CD4-positive, alpha-beta memory T cell (primary cell): ENCODE measurements at regions of chr19 and their contacts with region 1.

Region 1: GRCh38 chr19:54448774-54449700 is at the start of gene LENG8:
- DNase-seq: peak; percentile 98 to 99 (median 99)
- H3K4me3 ChIP-seq: peak within 1 kb of the TSS; percentile 75 to 98
- H3K4me3 Mint-ChIP-seq: peak within 1 kb of the TSS; percentile 91 to 100 (median 98)
- H3K27ac ChIP-seq: peak within 1 kb of the TSS; percentile 93
- H3K27ac Mint-ChIP-seq: peak within 1 kb of the TSS; percentile 96 to 100 (median 99)
- H3K4me1 ChIP-seq: peaks cover 46% of the 10 kb centered on the region
- H3K4me1 Mint-ChIP-seq: peaks cover 25 to 69% (median 41%) of the 10 kb centered on the region in 4 donors
- H3K27me3 ChIP-seq: no peaks in the 10 kb centered on the region
- H3K27me3 Mint-ChIP-seq: peaks cover 0 to 3% of the 10 kb centered on the region in 2 donors
- total RNA-seq, gene LENG8: 535 to 565 TPM

Region 2: DNA sequence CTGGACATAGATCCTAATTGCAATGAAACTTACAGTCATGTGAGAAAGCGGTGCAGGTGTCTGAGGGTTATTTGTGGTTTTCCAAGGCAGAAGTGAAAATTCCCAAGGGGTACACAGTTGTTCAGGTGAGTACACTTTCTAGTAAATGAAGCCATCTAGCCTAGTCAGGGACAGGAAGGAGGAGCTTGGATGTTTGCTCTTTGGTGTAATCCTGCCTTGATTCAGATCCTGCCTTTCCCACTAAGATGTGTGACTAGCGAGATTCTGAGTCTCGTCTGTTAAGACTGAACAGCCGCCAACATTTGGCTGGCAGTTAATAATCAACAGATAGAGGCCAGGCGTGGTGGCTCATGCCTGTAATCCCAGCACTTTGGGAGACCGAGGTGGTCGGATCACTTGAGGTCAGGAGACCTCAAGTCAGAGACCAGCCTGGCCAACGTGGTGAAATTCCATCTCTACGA is 245.9 kb before region 1 on chr19:
- CTCF ChIA-PET with region 1: no interaction called
- POLR2A ChIA-PET with region 1: interaction called, 6 read pairs
- intact Hi-C with region 1: loop called (anchors 5 kb)
- DNase-seq: no peak
- H3K4me3 ChIP-seq: no peak overlapping the region
- H3K4me3 Mint-ChIP-seq: peak overlapping the region; percentile 10 to 100 (median 64)
- H3K27ac ChIP-seq: peak overlapping the region; percentile 89
- H3K27ac Mint-ChIP-seq: peak overlapping the region in 6 of 7 donors; percentile 66 to 99 (median 85)
- H3K4me1 ChIP-seq: peaks cover 74% of the 10 kb centered on the region
- H3K4me1 Mint-ChIP-seq: peaks cover 44 to 86% (median 62%) of the 10 kb centered on the region in 4 donors
- H3K27me3 ChIP-seq: no peaks in the 10 kb centered on the region
- H3K27me3 Mint-ChIP-seq: no peaks in the 10 kb centered on the region

Region 3: DNA sequence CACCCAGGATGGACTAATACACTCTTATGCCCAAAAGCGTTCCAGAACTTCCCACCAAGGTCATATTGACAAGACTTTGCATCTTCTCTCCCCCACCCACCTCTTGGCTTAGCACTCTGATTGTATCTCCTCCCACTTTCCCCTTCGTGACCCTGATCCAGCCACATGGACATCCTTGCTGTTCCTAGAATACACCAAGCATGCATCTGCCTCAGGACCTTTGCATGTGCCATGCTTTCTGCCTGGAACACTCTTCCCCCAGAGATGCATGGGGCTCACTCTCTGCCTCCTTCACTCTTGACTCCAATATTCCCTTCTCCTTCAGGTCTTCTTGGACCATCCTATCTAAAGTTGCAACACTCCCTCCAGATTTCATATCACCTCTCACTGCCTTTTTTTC is 68.1 kb before region 1 on chr19:
- CTCF ChIA-PET with region 1: no interaction called
- POLR2A ChIA-PET with region 1: no interaction called
- intact Hi-C with region 1: no loop called
- DNase-seq: no peak
- H3K4me3 ChIP-seq: no peak overlapping the region
- H3K4me3 Mint-ChIP-seq: peak overlapping the region in 1 of 8 donors; percentile 27
- H3K27ac ChIP-seq: no peak overlapping the region
- H3K27ac Mint-ChIP-seq: peak overlapping the region in 3 of 7 donors; percentile 17 to 74 (median 49)
- H3K4me1 ChIP-seq: peaks cover 40% of the 10 kb centered on the region
- H3K4me1 Mint-ChIP-seq: peaks cover 35 to 61% (median 53%) of the 10 kb centered on the region in 4 donors
- H3K27me3 ChIP-seq: no peaks in the 10 kb centered on the region
- H3K27me3 Mint-ChIP-seq: no peaks in the 10 kb centered on the region

Region 4: DNA sequence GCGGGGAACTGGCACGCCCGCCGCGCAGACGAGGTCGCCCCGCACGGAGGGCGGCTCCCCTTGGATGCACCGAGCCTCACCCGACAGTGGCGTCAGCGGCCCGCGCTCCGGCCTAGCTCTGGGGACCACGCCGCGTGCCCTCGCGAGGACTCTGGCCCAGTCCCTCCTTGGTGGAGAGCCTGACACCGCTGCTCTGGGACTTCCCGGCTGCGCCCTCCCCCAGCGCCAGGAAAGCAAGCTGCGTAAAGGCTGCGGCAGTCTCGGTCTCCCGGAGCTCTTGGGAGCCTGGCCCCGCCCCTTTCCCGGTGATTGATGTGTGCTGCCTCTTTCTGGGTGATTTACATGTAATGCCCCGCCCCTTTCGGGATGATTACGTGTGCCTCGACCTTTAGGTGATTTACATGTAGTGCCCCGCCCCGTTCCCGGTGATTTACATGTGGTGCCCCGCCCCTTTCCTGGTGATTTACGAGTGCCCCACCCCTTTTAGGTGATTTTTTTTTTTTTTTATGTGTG is 14.6 kb after region 1 on chr19 and contains the start of gene LENG9:
- CTCF ChIA-PET with region 1: interaction called, 4 read pairs
- POLR2A ChIA-PET with region 1: interaction called, 142 read pairs
- intact Hi-C with region 1: loop called (anchors 1 kb)
- DNase-seq: peak; percentile 86 to 99 (median 91)
- H3K4me3 ChIP-seq: peak within 1 kb of the TSS; percentile 65 to 85
- H3K4me3 Mint-ChIP-seq: peak within 1 kb of the TSS; percentile 84 to 92 (median 89)
- H3K27ac ChIP-seq: peak within 1 kb of the TSS; percentile 81
- H3K27ac Mint-ChIP-seq: peak within 1 kb of the TSS; percentile 92 to 99 (median 95)
- H3K4me1 ChIP-seq: peaks cover 27% of the 10 kb centered on the region
- H3K4me1 Mint-ChIP-seq: peaks cover 15 to 37% (median 27%) of the 10 kb centered on the region in 4 donors
- H3K27me3 ChIP-seq: no peaks in the 10 kb centered on the region
- H3K27me3 Mint-ChIP-seq: peaks cover 0 to 2% of the 10 kb centered on the region in 2 donors
- total RNA-seq, gene LENG9: 7.2 to 7.3 TPM

Region 5: GRCh38 chr19:54541712-54542111 is 92.7 kb after region 1 on chr19:
- CTCF ChIA-PET with region 1: no interaction called
- POLR2A ChIA-PET with region 1: no interaction called
- intact Hi-C with region 1: no loop called
- DNase-seq: no peak
- H3K4me3 ChIP-seq: no peak overlapping the region
- H3K4me3 Mint-ChIP-seq: no peak overlapping the region
- H3K27ac ChIP-seq: no peak overlapping the region
- H3K27ac Mint-ChIP-seq: no peak overlapping the region
- H3K4me1 ChIP-seq: no peaks in the 10 kb centered on the region
- H3K4me1 Mint-ChIP-seq: no peaks in the 10 kb centered on the region
- H3K27me3 ChIP-seq: no peaks in the 10 kb centered on the region
- H3K27me3 Mint-ChIP-seq: peaks cover 4 to 22% of the 10 kb centered on the region in 2 donors

Region 6: DNA sequence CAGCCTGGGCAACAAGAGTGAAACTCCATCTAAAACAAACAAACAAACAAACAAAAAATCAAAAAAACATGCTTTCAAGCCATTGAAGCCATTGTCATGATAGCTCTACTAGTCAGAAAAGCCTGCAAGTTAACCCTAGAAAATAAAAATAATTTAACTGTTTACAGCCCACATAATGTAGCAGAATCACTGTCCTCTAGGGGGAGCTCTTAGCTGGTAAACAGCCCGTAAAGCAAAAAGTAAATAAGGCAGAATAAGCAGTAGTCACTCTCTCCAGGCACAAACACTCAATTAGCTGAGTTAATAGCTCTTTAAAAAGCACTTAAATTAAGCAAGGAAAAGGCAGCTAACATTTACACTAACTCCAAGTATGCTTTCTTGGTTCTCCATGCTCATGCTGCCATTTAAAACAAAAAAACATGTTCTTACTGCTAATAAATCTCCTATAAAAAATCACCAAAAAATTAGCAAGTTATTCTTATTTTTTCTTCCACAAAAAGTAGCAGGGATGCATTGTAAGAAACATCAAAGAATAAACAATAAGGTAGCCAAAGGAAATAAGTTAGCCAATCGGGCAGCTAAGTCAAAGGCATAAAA is 225.1 kb after region 1 on chr19:
- CTCF ChIA-PET with region 1: no interaction called
- POLR2A ChIA-PET with region 1: no interaction called
- intact Hi-C with region 1: no loop called
- DNase-seq: peak in 1 of 5 donors; percentile 4
- H3K4me3 ChIP-seq: no peak overlapping the region
- H3K4me3 Mint-ChIP-seq: no peak overlapping the region
- H3K27ac ChIP-seq: no peak overlapping the region
- H3K27ac Mint-ChIP-seq: no peak overlapping the region
- H3K4me1 ChIP-seq: no peaks in the 10 kb centered on the region
- H3K4me1 Mint-ChIP-seq: no peaks in the 10 kb centered on the region
- H3K27me3 ChIP-seq: no peaks in the 10 kb centered on the region
- H3K27me3 Mint-ChIP-seq: peaks cover 6 to 9% of the 10 kb centered on the region in 2 donors